ENCODE measurements at regions of chr5 and their contacts with region 1.

Region 1: GRCh38 chr5:31573494-31574142 is 41.5 kb downstream of the C5orf22 start:
- DNase-seq: no peak
- H3K4me3 ChIP-seq: no peak overlapping the region
- H3K27ac ChIP-seq: no peak overlapping the region
- H3K4me1 ChIP-seq: no peaks in the 10 kb centered on the region
- H3K27me3 ChIP-seq: peaks cover 11% of the 10 kb centered on the region; the same call in 1 of the 2 replicates

Region 2: DNA sequence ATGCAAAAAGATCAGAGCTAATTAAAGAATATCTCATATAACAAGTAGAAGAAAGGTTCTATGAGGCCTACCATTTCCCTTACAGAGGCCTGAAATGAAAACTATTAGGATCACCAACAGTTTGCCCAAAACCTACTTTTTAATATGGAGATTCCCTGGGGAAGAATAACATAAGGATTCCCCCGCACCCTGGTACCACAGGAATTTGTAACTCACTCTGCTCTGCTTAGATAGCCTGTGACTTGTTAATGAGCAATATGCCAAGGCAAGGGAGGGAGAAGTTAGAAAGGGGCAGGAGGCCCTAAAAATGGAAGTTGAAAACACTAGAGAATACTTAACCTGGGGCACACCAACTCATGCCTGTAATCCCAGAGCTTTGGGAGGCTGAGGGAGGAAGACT is 273.1 kb before region 1 on chr5:
- in situ Hi-C with region 1: no loop called
- DNase-seq: peak; percentile 25
- H3K4me3 ChIP-seq: no peak overlapping the region
- H3K27ac ChIP-seq: no peak overlapping the region
- H3K4me1 ChIP-seq: no peaks in the 10 kb centered on the region
- H3K27me3 ChIP-seq: no peaks in the 10 kb centered on the region

Region 3: DNA sequence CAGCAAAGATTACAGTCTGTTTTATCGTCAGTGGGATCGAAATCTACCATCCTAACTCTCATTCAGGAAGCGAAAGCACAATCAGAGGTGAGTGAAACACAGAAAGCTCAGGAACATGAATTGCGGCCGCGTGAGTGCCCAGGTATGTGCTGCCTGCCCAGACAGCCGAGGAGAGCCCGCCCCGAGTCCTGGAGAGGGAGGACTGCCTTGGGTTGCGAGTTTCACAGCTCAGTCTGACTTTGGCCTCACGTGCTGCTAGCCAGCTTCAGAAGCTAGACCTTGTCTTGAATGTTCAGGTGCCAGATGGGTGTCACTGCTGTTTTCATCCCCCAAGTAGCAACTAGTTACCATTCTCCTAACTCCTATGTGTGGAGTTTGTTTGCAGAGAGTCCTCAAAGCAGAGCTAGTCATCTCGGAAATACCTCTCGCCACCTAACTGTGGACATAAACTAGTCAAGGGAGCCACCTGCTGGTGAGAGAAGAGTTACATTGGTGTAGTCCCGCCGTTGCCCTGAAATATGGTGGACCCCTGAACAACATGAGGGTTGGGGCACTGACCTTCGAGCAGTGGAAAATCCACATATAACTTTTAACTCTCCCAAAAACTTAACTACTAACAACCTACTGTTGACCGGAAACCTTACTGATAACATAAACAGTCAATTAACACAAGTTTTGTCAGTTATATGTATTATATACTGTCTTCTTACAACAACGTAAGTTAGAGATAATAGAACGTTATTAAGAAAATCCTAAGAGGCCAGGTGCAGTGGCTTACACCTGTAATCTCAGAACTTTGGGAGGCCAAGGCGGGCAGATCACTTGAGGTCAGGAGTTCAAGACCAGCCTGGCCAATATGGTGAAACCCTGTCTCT is 519.6 kb after region 1 on chr5:
- in situ Hi-C with region 1: loop called (anchors 10 kb)
- DNase-seq: peak; percentile 86
- H3K4me3 ChIP-seq: no peak overlapping the region
- H3K27ac ChIP-seq: no peak overlapping the region
- H3K4me1 ChIP-seq: no peaks in the 10 kb centered on the region
- H3K27me3 ChIP-seq: no peaks in the 10 kb centered on the region

Region 4: DNA sequence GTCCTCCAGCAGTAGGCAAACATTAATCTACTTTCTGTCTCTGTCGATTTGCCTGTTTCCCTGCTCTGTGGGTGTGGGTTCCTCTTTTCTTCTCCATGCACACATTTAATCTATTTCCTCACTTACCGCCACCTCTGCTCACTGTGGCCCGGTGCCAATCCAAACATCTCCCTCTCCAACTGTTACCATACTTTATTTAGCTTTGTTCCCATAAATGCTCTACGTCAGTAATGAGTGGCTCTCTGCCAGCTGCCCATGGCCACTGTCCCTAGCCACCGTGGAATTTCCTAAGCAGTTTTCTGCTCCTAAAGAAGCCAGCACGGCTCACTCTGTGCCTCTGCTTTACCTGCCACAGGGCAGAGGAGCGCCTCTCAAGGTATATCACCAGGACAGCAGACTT is 620.0 kb after region 1 on chr5:
- in situ Hi-C with region 1: no loop called
- DNase-seq: peak; percentile 65
- H3K4me3 ChIP-seq: peak overlapping the region; percentile 20; the same call in 1 of the 2 replicates
- H3K27ac ChIP-seq: no peak overlapping the region
- H3K4me1 ChIP-seq: peaks cover 10% of the 10 kb centered on the region
- H3K27me3 ChIP-seq: no peaks in the 10 kb centered on the region